ENCODE measurements at regions of chr11 and their contacts with region 1.

Region 1: GRCh38 chr11:93662177-93662575 is 694 bp downstream of the CEP295 start:
- DNase-seq: no peak
- ATAC-seq: no peak
- H3K4me3 ChIP-seq: peak overlapping the region; percentile 80
- H3K4me3 Mint-ChIP-seq: peak overlapping the region; percentile 85
- H3K27ac ChIP-seq: peak overlapping the region; percentile 80 to 91
- H3K27ac Mint-ChIP-seq: peak overlapping the region; percentile 83
- H3K4me1 ChIP-seq: peaks cover 11% of the 10 kb centered on the region
- H3K4me1 Mint-ChIP-seq: peaks cover 48% of the 10 kb centered on the region
- H3K27me3 ChIP-seq: no peaks in the 10 kb centered on the region
- H3K27me3 Mint-ChIP-seq: no peaks in the 10 kb centered on the region
- CTCF ChIP-seq: no peak

Region 2: DNA sequence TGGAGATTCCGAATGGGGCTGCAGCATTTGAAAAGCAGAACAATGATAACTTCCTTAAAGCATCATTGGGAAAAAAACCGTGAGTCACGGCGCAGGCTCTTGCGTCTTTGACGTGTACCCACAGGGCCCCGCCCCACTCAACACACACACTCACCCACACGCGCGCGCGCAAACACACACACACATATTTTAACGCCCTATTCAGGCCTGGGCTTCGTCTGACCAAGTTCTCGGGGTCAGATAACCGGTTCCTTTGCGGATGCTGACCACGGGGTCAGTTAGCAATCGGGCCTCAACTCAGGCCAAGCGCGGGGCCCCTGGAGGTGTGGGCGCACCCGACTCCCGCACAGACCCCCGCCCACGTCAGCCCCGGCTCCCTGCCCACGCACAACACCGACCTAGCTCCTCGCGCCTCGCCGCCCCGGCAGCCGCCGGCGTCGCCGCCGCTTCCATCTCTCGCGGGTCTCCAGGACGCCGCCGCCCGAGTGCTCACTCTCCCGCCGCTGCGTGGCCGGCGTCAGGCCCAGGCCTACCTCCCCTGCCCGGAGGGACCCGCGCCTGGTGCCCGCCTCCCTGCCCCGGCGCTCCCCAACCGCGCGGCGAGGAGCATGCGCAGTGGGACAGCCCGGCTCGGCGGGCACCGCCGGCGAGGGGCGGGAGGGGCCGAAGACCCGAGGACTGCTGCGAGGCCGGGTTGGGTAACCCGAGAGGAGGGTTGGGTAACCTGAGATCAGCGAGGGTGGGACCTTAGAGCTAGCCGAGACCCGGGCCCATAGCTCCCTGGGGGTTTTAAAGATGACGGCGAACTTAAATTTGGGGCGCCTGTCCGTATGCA is 464.6 kb before region 1 on chr11 and contains the start of gene SLC36A4:
- CTCF ChIA-PET with region 1: no interaction called
- POLR2A ChIA-PET with region 1: no interaction called
- intact Hi-C with region 1: loop called in 1 of 2 experiments (anchors 5 kb)
- DNase-seq: peak; percentile 76 to 95 (median 80)
- ATAC-seq: peak; percentile 88
- H3K4me3 ChIP-seq: peak within 1 kb of the TSS; percentile 78
- H3K4me3 Mint-ChIP-seq: peak within 1 kb of the TSS; percentile 94
- H3K27ac ChIP-seq: peak within 1 kb of the TSS; percentile 85 to 90
- H3K27ac Mint-ChIP-seq: peak within 1 kb of the TSS; percentile 97
- H3K4me1 ChIP-seq: peaks cover 6% of the 10 kb centered on the region
- H3K4me1 Mint-ChIP-seq: peaks cover 26% of the 10 kb centered on the region
- H3K27me3 ChIP-seq: no peaks in the 10 kb centered on the region
- H3K27me3 Mint-ChIP-seq: no peaks in the 10 kb centered on the region
- CTCF ChIP-seq: no peak
- total RNA-seq, gene SLC36A4: 15.9 to 16.4 TPM

Region 3: DNA sequence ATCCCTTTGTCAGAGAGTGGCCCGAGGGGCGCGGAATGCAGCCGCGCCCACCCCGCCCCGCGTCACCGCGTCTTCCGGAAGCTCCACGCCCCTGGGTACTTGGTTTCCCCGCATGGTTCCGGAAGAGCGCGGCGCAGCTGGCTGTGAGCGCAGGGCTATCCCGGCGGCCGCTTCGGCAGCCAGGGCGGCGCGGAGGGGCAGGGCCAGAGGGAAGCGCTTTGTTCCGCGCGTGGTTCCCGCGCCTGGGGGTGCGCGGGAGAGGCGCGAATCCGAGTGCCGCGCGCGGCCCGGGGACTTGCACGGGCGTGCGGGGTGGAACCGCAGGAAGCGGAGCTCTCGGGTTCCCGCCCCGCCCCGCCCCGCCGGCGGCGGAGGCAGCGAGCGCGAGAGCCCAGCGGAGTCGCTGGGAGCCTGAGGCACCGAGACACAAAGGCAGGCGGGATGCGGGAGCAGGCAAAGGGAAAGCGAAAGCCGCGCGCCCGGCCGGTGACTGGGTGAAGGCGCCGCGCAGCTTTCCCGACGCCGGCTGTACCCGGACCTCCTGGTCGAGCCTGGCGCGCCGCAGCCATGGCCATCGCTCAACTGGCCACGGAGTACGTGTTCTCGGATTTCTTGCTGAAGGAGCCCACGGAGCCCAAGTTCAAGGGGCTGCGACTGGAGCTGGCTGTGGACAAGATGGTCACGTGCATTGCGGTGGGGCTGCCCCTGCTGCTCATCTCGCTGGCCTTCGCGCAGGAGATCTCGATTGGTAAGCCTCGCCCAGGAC is 466.8 kb after region 1 on chr11 and contains the start of gene PANX1:
- CTCF ChIA-PET with region 1: no interaction called
- POLR2A ChIA-PET with region 1: no interaction called
- intact Hi-C with region 1: loop called in 1 of 2 experiments (anchors 5 kb)
- DNase-seq: peak; percentile 42 to 93 (median 64)
- ATAC-seq: peak; percentile 81
- H3K4me3 ChIP-seq: peak within 1 kb of the TSS; percentile 91
- H3K4me3 Mint-ChIP-seq: peak within 1 kb of the TSS; percentile 93
- H3K27ac ChIP-seq: peak within 1 kb of the TSS; percentile 64 to 90
- H3K27ac Mint-ChIP-seq: peak within 1 kb of the TSS; percentile 90
- H3K4me1 ChIP-seq: peaks cover 47% of the 10 kb centered on the region
- H3K4me1 Mint-ChIP-seq: peaks cover 26% of the 10 kb centered on the region
- H3K27me3 ChIP-seq: no peaks in the 10 kb centered on the region
- H3K27me3 Mint-ChIP-seq: no peaks in the 10 kb centered on the region
- CTCF ChIP-seq: no peak
- total RNA-seq, gene PANX1: 4.8 to 4.9 TPM